Ascending aorta (tissue), 2 donors: ENCODE measurements at regions of chr11 and their contacts with region 1.

Region 1: DNA sequence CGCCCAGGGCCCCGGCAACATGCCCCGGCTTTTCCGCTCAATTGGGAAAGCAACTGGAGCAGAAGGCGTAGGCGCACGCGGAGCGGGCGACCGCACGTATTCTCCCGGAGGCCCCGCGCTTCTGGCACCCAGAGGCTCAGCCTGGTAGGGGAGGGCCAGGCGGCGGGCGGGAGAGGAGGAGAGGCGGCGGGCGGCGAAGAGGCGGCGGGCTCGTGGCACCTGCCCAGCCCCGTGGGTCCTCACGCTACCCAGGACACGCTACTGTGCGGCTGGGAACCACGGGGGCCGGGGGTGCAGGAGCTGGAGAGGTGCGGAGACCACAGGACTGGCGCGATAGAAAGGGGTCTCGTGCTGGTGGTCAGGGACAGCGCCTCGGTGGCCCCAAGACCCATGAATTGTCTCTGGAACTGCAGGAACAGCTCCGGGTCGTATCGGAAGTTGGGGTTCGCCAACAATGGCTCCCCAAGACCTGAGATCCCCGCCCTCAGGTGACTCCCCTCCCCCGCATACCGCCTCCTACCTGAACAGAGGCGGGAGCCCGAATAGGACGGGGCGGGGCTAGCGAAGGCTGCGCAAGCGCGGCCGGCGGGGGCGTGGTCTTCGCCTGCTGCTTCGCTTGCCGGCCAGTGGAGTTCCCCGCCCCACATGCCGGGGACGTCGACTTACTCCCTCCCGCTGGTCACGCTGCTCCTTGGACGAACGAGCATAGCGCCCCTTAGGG is at the start of gene SLC37A4:
- DNase-seq: peak; percentile 94 to 99
- H3K4me3 ChIP-seq: peak within 1 kb of the TSS; percentile 84 to 89
- H3K27ac ChIP-seq: peak within 1 kb of the TSS; percentile 61 to 77
- H3K4me1 ChIP-seq: peaks cover 5 to 13% of the 10 kb centered on the region in 2 donors
- H3K27me3 ChIP-seq: no peaks in the 10 kb centered on the region
- CTCF ChIP-seq: peak; percentile 84 to 90 (median 88)
- total RNA-seq, gene SLC37A4: 21.2 TPM

Region 2: GRCh38 chr11:118956094-118956846 is 74.2 kb before region 1 on chr11 and contains the start of gene UPK2:
- intact Hi-C with region 1: no loop called
- DNase-seq: peak; percentile 49 to 93
- H3K4me3 ChIP-seq: no peak within 1 kb of the TSS
- H3K27ac ChIP-seq: no peak within 1 kb of the TSS
- H3K4me1 ChIP-seq: no peaks in the 10 kb centered on the region
- H3K27me3 ChIP-seq: no peaks in the 10 kb centered on the region
- CTCF ChIP-seq: peak; percentile 91 to 98 (median 91)
- total RNA-seq, gene UPK2: not detected

Region 3: GRCh38 chr11:119018074-119018938 is 12.2 kb before region 1 on chr11 and contains the starts of genes RPS25 and TRAPPC4:
- intact Hi-C with region 1: loop called (anchors 1 kb)
- DNase-seq: peak; percentile 87 to 97
- H3K4me3 ChIP-seq: peak within 1 kb of the TSS; percentile 78 to 89
- H3K27ac ChIP-seq: peak within 1 kb of the TSS; percentile 83 to 96
- H3K4me1 ChIP-seq: peaks cover 7 to 32% of the 10 kb centered on the region in 2 donors
- H3K27me3 ChIP-seq: no peaks in the 10 kb centered on the region
- CTCF ChIP-seq: peak in 1 of 3 experiments; percentile 15
- total RNA-seq, gene RPS25: 857 TPM
- total RNA-seq, gene TRAPPC4: 41.0 TPM

Region 4: GRCh38 chr11:119273721-119274120 is 243.2 kb after region 1 on chr11:
- intact Hi-C with region 1: no loop called
- DNase-seq: no peak
- H3K4me3 ChIP-seq: no peak overlapping the region
- H3K27ac ChIP-seq: no peak overlapping the region
- H3K4me1 ChIP-seq: no peaks in the 10 kb centered on the region
- H3K27me3 ChIP-seq: no peaks in the 10 kb centered on the region
- CTCF ChIP-seq: no peak